ENCODE measurements at regions of chr17 and their contacts with region 1.

Region 1: DNA sequence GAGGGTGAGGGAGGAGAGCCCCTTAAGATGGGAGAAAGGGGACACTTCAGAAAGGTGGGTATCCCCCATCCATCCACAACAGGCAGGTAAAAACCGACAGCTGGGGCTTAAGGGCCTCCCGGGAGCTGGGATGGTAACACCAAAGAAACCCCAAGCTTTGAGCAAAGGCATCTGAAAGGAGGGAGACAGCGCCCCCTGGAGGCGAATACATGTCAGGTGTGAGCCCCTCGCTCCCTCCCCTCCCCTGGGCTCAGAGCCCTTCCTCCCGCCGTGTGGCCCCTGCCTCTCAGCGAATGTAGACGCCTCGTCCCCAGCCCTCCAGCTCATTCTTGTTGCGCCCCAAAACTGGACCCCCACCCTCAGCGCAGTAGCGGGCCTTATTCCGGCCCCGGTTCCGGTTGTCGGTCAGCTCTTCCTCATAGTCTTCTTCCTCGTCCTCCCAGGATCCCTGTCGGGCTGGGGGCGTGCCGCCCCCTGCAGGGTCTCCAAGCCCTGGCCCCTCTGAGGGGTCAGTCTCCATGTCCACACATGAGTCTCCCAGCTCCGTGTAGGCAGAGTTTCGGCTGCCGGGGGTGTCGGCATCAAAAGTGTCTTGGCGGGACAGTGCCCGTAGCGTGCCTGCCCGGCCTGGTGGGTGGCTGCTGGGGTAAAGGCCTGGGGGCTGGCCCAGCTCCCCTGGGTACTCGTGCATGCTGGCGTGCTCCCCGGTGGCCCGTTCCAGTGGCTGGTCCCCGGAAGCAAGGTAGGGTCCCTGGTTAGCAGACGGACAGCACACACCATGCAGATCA is 9.1 kb upstream of the ARL5C start:
- DNase-seq: peak; percentile 92
- ATAC-seq: peak; percentile 53
- H3K4me3 Mint-ChIP-seq: peak overlapping the region; percentile 39
- H3K27ac Mint-ChIP-seq: peak overlapping the region; percentile 32; the same call in 1 of the 2 replicates
- H3K4me1 Mint-ChIP-seq: peaks cover 41% of the 10 kb centered on the region
- H3K27me3 Mint-ChIP-seq: peaks cover 12% of the 10 kb centered on the region
- CTCF ChIP-seq: peak; percentile 98

Region 2: DNA sequence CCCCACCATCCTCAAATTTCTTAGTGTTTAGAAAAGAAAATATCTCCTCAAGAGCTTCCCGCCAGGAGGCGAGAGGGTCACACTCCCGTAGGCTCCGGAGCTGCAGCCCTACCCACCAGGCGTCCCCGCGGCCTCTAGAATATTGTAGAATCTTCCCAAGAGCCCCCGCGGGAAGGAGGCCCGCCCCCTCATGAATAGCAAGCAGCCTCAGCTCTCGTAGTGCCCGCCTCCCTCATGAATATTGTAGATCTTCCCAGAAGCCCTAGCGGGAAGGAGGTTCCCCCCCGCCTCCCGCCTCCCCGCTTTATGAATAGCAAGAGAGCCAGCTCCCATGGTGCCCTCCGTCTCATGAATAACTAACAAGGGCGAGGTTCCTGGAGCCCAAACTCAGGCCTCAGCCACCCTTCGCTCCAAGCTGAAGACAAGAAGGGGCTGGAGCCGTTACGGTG is 207.8 kb before region 1 on chr17 and contains the start of gene FBXO47:
- CTCF ChIA-PET with region 1: interaction called, 13 read pairs
- POLR2A ChIA-PET with region 1: no interaction called
- DNase-seq: peak; percentile 96
- ATAC-seq: peak; percentile 98
- H3K4me3 Mint-ChIP-seq: peak within 1 kb of the TSS; percentile 67
- H3K27ac Mint-ChIP-seq: peak within 1 kb of the TSS; percentile 89
- H3K4me1 Mint-ChIP-seq: peaks cover 14% of the 10 kb centered on the region
- H3K27me3 Mint-ChIP-seq: no peaks in the 10 kb centered on the region; the same call in 1 of the 2 replicates
- CTCF ChIP-seq: no peak
- total RNA-seq, gene FBXO47: not detected in 3 replicates

Region 3: GRCh38 chr17:39144416-39144840 is 30.7 kb before region 1 on chr17:
- CTCF ChIA-PET with region 1: interaction called, 10 read pairs
- POLR2A ChIA-PET with region 1: no interaction called
- DNase-seq: no peak
- ATAC-seq: no peak
- H3K4me3 Mint-ChIP-seq: no peak overlapping the region
- H3K27ac Mint-ChIP-seq: no peak overlapping the region
- H3K4me1 Mint-ChIP-seq: peaks cover 4% of the 10 kb centered on the region; the same call in 1 of the 2 replicates
- H3K27me3 Mint-ChIP-seq: peaks cover 7% of the 10 kb centered on the region
- CTCF ChIP-seq: no peak

Region 4: GRCh38 chr17:39186481-39187002 is 11.4 kb after region 1 on chr17:
- CTCF ChIA-PET with region 1: interaction called, 39 read pairs
- POLR2A ChIA-PET with region 1: no interaction called
- DNase-seq: no peak
- ATAC-seq: no peak
- H3K4me3 Mint-ChIP-seq: no peak overlapping the region
- H3K27ac Mint-ChIP-seq: no peak overlapping the region
- H3K4me1 Mint-ChIP-seq: no peaks in the 10 kb centered on the region
- H3K27me3 Mint-ChIP-seq: no peaks in the 10 kb centered on the region
- CTCF ChIP-seq: no peak

Region 5: GRCh38 chr17:39209317-39210092 is 34.4 kb after region 1 on chr17:
- CTCF ChIA-PET with region 1: interaction called, 25 read pairs
- POLR2A ChIA-PET with region 1: no interaction called
- DNase-seq: peak; percentile 61
- ATAC-seq: peak; percentile 8
- H3K4me3 Mint-ChIP-seq: peak overlapping the region; percentile 64
- H3K27ac Mint-ChIP-seq: no peak overlapping the region
- H3K4me1 Mint-ChIP-seq: peaks cover 47% of the 10 kb centered on the region
- H3K27me3 Mint-ChIP-seq: peaks cover 7% of the 10 kb centered on the region
- CTCF ChIP-seq: no peak

Region 6: DNA sequence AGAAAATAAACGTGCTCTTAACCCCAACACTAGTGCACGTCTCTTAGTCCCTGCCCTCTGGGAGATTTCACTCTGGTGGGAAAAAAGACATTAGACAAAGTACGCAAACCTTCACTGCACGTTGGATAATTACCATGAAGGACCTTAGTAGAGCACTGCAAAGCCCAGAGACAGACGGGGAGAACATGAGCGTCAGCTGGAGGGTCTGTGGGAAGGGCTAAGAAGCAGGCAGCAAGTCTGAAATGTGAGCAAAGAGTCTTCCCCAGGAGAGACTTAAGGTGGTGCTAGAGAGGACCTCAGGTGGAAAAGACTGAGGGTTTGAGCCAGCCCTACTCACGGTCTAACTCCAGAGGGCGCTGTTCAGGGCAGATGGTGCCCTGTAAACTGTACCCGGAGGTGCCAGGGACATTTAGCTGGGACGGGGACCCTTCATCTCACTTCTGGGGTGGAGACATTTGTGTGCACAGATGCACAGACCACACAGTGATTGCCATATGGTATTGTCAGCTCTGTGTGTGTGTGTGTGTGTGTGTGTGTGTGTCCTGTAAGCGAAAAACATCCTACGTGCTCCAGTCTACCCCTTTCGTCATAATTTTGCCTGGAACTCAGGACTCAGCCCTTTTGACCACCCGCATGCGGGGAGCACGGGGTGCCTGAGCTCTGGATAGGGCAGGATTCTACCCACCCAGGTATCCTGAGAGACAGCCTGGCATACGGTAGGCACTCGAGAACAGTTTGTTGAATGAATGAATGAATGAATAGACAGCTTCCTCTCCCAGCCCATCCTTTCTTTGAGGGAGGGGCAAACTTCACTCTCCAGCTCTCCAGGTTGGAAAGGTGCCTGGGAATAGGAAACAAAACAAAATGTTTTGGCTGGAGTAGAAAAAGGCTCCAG is 60.7 kb after region 1 on chr17:
- CTCF ChIA-PET with region 1: interaction called, 15 read pairs
- POLR2A ChIA-PET with region 1: no interaction called
- DNase-seq: peak; percentile 79
- ATAC-seq: peak; percentile 85
- H3K4me3 Mint-ChIP-seq: peak overlapping the region; percentile 35; the same call in 1 of the 2 replicates
- H3K27ac Mint-ChIP-seq: peak overlapping the region; percentile 80; the same call in 1 of the 2 replicates
- H3K4me1 Mint-ChIP-seq: peaks cover 25% of the 10 kb centered on the region
- H3K27me3 Mint-ChIP-seq: peaks cover 6% of the 10 kb centered on the region; the same call in 1 of the 2 replicates
- CTCF ChIP-seq: peak; percentile 94

Measured in WTC11 (cell line).